OCI-LY7 (cell line): ENCODE measurements at regions of chr9 and their contacts with region 1.

Region 1: DNA sequence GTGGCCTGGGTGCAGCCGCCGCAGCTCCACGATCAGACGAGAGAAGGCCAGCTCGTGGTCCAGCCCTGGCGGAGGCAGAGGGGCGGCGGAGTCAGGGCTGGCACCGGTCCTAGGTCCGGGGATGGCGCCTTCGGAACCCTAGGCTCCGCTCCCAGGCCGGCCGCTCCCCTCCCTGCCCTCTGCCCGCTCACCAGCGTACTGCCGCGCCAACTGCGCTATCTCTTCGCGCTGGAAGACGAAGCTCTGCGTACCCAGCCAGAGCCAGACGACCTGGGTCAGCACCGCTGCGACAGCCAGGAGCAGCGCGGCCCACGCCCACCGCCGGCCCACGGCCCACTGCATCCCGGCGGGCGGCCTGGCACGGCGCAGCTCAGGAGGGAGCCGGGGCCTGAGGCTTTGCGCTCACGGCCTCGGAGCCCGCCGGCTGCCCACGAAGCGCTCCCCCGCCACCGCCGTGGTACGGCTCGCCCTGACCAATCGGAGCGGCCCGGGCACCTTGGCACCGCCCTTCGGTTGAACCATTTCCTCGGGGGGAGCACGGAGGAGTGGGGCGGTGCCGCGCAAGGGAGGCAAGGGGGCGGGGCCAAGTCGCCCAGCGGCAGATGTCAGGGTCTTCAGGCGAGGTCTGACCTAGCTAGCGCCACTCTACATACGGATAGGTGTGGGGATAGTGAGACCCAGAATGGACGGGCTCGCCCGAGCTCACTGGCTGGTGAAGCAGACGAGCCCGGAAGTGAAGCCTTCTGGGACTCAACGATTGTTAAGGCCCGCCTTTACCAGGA is at the start of gene SIGMAR1:
- DNase-seq: peak; percentile 96
- H3K4me3 ChIP-seq: peak within 1 kb of the TSS; percentile 86
- H3K27ac ChIP-seq: peak within 1 kb of the TSS; percentile 48
- H3K4me1 ChIP-seq: peaks cover 24% of the 10 kb centered on the region
- CTCF ChIP-seq: no peak
- total RNA-seq, gene SIGMAR1: 97.2 and 103 TPM in 2 replicates

Region 2: GRCh38 chr9:34591248-34591916 is 46.2 kb before region 1 on chr9:
- CTCF ChIA-PET with region 1: no interaction called
- POLR2A ChIA-PET with region 1: no interaction called
- intact Hi-C with region 1: no loop called
- DNase-seq: peak; percentile 63
- H3K4me3 ChIP-seq: no peak overlapping the region
- H3K27ac ChIP-seq: no peak overlapping the region
- H3K4me1 ChIP-seq: no peaks in the 10 kb centered on the region
- CTCF ChIP-seq: peak; percentile 85

Region 3: DNA sequence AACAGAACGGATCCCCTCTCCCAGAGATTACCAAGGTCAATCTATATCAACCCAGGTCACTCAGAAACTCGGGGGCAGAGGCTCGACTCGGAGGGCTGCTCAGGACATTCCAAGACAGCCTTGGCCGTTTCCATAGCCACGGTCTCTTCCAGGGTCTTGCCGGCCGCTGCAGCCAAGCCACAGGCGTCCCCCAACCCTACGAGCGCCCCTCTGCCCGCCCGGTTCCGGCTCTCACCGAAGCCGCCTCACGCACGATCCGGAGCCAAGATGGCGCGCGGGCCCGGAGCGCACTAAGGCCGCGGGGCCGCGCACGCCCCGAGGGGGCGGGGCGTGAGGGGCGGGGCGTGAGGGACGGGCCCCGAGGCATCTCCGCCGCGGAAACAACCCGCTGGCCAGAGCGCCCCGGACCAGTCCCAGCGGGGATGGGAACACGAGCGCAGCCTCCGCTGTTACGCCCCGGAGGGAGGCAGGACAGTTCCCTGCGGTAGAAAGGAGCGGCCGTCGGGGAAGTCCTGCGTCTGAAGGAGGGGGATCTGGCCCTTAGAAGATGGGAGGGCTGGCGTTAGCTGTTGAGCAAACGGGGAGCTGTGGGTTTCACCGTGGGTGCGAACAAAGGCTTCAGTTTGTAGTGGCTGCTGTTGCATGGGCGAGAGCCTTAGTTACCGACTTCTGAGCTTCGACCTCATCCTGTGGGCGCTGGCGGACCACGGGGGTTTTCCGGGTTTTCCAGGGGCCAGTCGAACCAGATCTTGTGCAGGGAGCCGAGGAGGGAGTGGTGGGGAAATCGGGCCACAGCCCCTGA is 25.5 kb before region 1 on chr9 and contains the start of gene RPP25L:
- CTCF ChIA-PET with region 1: interaction called, 6 read pairs
- POLR2A ChIA-PET with region 1: interaction called, 12 read pairs
- intact Hi-C with region 1: loop called (anchors 1 kb)
- DNase-seq: peak; percentile 89
- H3K4me3 ChIP-seq: peak within 1 kb of the TSS; percentile 91
- H3K27ac ChIP-seq: peak within 1 kb of the TSS; percentile 36
- H3K4me1 ChIP-seq: peaks cover 21% of the 10 kb centered on the region
- CTCF ChIP-seq: 0 out of 2 replicates have a peak, but pooled peaks have one; percentile 3
- total RNA-seq, gene RPP25L: 33.6 and 40.3 TPM in 2 replicates

Region 4: GRCh38 chr9:34620061-34620994 is 17.2 kb before region 1 on chr9 and contains the start of gene DCTN3:
- CTCF ChIA-PET with region 1: interaction called, 9 read pairs
- POLR2A ChIA-PET with region 1: interaction called, 43 read pairs
- intact Hi-C with region 1: no loop called
- DNase-seq: peak; percentile 96
- H3K4me3 ChIP-seq: peak within 1 kb of the TSS; percentile 78
- H3K27ac ChIP-seq: no peak within 1 kb of the TSS
- H3K4me1 ChIP-seq: peaks cover 15% of the 10 kb centered on the region
- CTCF ChIP-seq: no peak
- total RNA-seq, gene DCTN3: 79.7 and 80.3 TPM in 2 replicates

Region 5: DNA sequence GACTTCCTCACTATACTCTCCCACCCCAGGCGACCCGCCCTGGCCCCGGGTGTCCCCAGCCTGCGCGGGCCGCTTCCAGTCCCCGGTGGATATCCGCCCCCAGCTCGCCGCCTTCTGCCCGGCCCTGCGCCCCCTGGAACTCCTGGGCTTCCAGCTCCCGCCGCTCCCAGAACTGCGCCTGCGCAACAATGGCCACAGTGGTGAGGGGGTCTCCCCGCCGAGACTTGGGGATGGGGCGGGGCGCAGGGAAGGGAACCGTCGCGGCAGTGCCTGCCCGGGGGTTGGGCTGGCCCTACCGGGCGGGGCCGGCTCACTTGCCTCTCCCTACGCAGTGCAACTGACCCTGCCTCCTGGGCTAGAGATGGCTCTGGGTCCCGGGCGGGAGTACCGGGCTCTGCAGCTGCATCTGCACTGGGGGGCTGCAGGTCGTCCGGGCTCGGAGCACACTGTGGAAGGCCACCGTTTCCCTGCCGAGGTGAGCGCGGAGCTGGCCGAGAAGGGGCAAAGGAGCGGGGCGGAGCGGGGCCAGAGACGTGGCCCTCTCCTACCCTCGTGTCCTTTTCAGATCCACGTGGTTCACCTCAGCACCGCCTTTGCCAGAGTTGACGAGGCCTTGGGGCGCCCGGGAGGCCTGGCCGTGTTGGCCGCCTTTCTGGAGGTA is 1038.3 kb after region 1 on chr9:
- CTCF ChIA-PET with region 1: no interaction called
- POLR2A ChIA-PET with region 1: no interaction called
- intact Hi-C with region 1: no loop called
- DNase-seq: no peak
- H3K4me3 ChIP-seq: no peak overlapping the region
- H3K27ac ChIP-seq: no peak overlapping the region
- H3K4me1 ChIP-seq: peaks cover 20% of the 10 kb centered on the region
- CTCF ChIP-seq: no peak